ENCODE measurements at regions of chr6 and their contacts with region 1.

Region 1: DNA sequence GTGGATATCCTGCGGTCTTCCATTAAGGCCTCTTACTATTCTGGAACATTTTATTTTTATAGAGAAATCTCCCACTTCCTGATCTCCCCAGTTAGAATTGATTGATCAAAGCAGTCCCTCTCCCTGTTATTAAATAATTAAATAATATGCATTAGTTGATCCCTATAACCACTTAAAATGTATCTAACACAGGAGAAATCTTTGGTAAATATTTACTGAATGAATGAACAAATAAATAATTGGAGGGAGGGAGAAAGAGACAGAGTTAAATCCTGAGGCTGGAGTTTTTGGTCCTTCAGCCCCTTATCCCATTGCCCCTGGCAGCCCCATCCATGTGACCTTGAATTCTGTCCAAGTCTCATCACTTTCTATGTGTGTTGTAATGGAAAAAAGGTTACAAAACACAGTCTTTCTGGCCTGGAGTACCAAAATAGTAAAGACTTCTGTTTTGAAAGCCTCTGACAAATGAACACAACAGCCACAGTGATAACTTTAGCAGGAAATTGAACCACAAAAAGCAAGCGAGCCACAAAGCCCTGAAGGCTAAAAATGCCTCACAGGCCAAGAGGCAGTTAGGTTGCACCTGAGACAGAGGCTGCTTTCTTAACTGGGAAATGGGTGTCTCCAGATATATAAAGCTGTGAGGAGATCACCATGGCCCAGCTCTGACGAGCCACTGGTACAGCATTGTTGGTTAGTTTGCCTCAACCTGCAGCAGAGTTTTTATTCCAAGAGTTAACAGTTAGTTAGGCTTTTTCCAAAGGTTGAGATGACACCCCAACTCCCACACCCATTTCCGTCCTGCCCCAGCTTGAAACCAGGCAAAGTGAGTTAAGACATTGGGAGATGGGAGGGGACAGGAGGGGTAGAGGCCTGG is 11.3 kb downstream of the NT5E start:
- DNase-seq: peak in 7 of 9 experiments; percentile 26 to 75 (median 62)
- ATAC-seq: peak; percentile 64
- H3K4me3 ChIP-seq: peak overlapping the region in 1 of 2 experiments; percentile 0
- H3K4me3 Mint-ChIP-seq: peak overlapping the region; percentile 70
- H3K27ac ChIP-seq: peak overlapping the region; percentile 22 to 69
- H3K27ac Mint-ChIP-seq: peak overlapping the region; percentile 92
- H3K4me1 ChIP-seq: peaks cover 100% of the 10 kb centered on the region
- H3K4me1 Mint-ChIP-seq: peaks cover 98% of the 10 kb centered on the region
- H3K27me3 ChIP-seq: no peaks in the 10 kb centered on the region
- H3K27me3 Mint-ChIP-seq: peaks cover 2% of the 10 kb centered on the region
- CTCF ChIP-seq: no peak

Region 2: GRCh38 chr6:84284428-84285049 is 1176.6 kb before region 1 on chr6:
- CTCF ChIA-PET with region 1: no interaction called
- POLR2A ChIA-PET with region 1: no interaction called
- intact Hi-C with region 1: no loop called
- DNase-seq: no peak
- ATAC-seq: no peak
- H3K4me3 ChIP-seq: no peak overlapping the region
- H3K4me3 Mint-ChIP-seq: no peak overlapping the region
- H3K27ac ChIP-seq: no peak overlapping the region
- H3K27ac Mint-ChIP-seq: no peak overlapping the region
- H3K4me1 ChIP-seq: no peaks in the 10 kb centered on the region
- H3K4me1 Mint-ChIP-seq: no peaks in the 10 kb centered on the region
- H3K27me3 ChIP-seq: no peaks in the 10 kb centered on the region
- H3K27me3 Mint-ChIP-seq: peaks cover 13% of the 10 kb centered on the region
- CTCF ChIP-seq: no peak

Region 3: DNA sequence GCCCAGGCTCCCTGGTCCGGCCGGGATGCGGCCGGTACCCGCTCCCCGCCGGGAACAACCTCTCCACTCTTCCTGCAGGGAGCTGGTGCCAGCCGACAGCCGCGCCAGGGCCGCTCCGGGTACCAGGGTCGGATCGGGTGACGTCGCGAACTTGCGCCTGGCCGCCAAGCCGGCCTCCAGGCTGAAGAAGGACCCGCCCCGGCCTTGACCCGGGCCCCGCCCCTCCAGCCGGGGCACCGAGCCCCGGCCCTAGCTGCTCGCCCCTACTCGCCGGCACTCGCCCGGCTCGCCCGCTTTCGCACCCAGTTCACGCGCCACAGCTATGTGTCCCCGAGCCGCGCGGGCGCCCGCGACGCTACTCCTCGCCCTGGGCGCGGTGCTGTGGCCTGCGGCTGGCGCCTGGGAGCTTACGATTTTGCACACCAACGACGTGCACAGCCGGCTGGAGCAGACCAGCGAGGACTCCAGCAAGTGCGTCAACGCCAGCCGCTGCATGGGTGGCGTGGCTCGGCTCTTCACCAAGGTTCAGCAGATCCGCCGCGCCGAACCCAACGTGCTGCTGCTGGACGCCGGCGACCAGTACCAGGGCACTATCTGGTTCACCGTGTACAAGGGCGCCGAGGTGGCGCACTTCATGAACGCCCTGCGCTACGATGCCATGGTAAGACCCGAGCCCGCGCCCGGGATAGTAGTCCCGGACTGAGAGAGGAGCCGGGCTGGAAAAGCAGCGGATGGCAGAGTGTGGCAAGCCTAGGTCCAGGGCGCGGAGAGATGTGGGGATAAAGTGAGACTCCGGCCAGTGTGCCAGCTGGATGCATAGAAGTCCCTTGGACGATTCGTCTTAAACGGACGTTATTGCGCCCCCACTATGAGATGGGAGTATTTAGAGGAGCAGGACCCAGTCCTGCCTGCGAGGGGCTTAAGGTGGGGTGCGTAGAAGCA is 11.1 kb before region 1 on chr6 and contains the start of gene NT5E:
- CTCF ChIA-PET with region 1: interaction called, 41 read pairs
- POLR2A ChIA-PET with region 1: interaction called, 69 read pairs
- intact Hi-C with region 1: loop called in 1 of 2 experiments (anchors 1 kb)
- DNase-seq: peak; percentile 19 to 78 (median 61)
- ATAC-seq: peak; percentile 58
- H3K4me3 ChIP-seq: peak within 1 kb of the TSS; percentile 64 to 65
- H3K4me3 Mint-ChIP-seq: peak within 1 kb of the TSS; percentile 98
- H3K27ac ChIP-seq: peak within 1 kb of the TSS; percentile 40 to 71
- H3K27ac Mint-ChIP-seq: peak within 1 kb of the TSS; percentile 97
- H3K4me1 ChIP-seq: peaks cover 44% of the 10 kb centered on the region
- H3K4me1 Mint-ChIP-seq: peaks cover 62% of the 10 kb centered on the region
- H3K27me3 ChIP-seq: peaks cover 0 to 6% of the 10 kb centered on the region in 2 experiments
- H3K27me3 Mint-ChIP-seq: no peaks in the 10 kb centered on the region
- CTCF ChIP-seq: no peak
- total RNA-seq, gene NT5E: 12.7 to 13.0 TPM

Region 4: GRCh38 chr6:85516168-85516567 is 55.0 kb after region 1 on chr6:
- CTCF ChIA-PET with region 1: no interaction called
- POLR2A ChIA-PET with region 1: no interaction called
- intact Hi-C with region 1: no loop called
- DNase-seq: no peak
- ATAC-seq: no peak
- H3K4me3 ChIP-seq: no peak overlapping the region
- H3K4me3 Mint-ChIP-seq: no peak overlapping the region
- H3K27ac ChIP-seq: no peak overlapping the region
- H3K27ac Mint-ChIP-seq: no peak overlapping the region
- H3K4me1 ChIP-seq: no peaks in the 10 kb centered on the region
- H3K4me1 Mint-ChIP-seq: no peaks in the 10 kb centered on the region
- H3K27me3 ChIP-seq: no peaks in the 10 kb centered on the region
- H3K27me3 Mint-ChIP-seq: no peaks in the 10 kb centered on the region
- CTCF ChIP-seq: no peak

Measured in CD8-positive, alpha-beta T cell (primary cell).